ENCODE measurements at regions of chr9 and their contacts with region 1.

Region 1: GRCh38 chr9:124415102-124415851 is at the start of gene PSMB7:
- DNase-seq: peak; percentile 99
- H3K4me3 Mint-ChIP-seq: peak within 1 kb of the TSS; percentile 96
- H3K27ac Mint-ChIP-seq: peak within 1 kb of the TSS; percentile 95
- H3K4me1 Mint-ChIP-seq: peaks cover 26% of the 10 kb centered on the region
- H3K27me3 Mint-ChIP-seq: no peaks in the 10 kb centered on the region
- total RNA-seq, gene PSMB7: 223 and 225 TPM in 2 replicates

Region 2: GRCh38 chr9:122767817-122768216 is 1647.5 kb before region 1 on chr9:
- intact Hi-C with region 1: no loop called
- DNase-seq: no peak
- H3K4me3 Mint-ChIP-seq: no peak overlapping the region
- H3K27ac Mint-ChIP-seq: no peak overlapping the region
- H3K4me1 Mint-ChIP-seq: no peaks in the 10 kb centered on the region
- H3K27me3 Mint-ChIP-seq: no peaks in the 10 kb centered on the region

Region 3: GRCh38 chr9:123278361-123278760 is 1136.9 kb before region 1 on chr9:
- intact Hi-C with region 1: loop called (anchors 10 kb)
- DNase-seq: no peak
- H3K4me3 Mint-ChIP-seq: no peak overlapping the region
- H3K27ac Mint-ChIP-seq: no peak overlapping the region
- H3K4me1 Mint-ChIP-seq: peaks cover 2% of the 10 kb centered on the region
- H3K27me3 Mint-ChIP-seq: peaks cover 12% of the 10 kb centered on the region

Region 4: DNA sequence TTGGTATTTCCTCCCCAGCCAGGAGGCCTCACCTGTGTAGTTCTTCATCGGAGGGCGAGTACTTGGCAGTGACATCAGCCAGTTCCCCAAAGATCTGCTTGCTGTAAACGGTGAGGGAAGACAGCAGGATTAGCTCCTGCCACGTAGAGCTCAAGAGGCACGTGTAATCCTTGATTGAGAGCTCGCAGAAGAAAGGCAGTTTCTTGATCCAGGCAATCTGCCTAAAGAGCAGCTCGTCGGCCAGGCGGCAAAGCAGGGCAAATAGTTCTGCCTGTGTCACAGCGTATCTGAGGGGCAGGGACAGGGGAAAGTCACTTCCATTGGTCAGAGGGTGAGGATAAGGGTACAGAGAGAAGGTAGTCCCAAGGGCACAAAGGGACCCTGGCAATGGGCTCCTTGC is 120.6 kb after region 1 on chr9:
- intact Hi-C with region 1: loop called (anchors 1 kb)
- DNase-seq: no peak
- H3K4me3 Mint-ChIP-seq: no peak overlapping the region
- H3K27ac Mint-ChIP-seq: no peak overlapping the region
- H3K4me1 Mint-ChIP-seq: no peaks in the 10 kb centered on the region
- H3K27me3 Mint-ChIP-seq: peaks cover 6% of the 10 kb centered on the region

Region 5: DNA sequence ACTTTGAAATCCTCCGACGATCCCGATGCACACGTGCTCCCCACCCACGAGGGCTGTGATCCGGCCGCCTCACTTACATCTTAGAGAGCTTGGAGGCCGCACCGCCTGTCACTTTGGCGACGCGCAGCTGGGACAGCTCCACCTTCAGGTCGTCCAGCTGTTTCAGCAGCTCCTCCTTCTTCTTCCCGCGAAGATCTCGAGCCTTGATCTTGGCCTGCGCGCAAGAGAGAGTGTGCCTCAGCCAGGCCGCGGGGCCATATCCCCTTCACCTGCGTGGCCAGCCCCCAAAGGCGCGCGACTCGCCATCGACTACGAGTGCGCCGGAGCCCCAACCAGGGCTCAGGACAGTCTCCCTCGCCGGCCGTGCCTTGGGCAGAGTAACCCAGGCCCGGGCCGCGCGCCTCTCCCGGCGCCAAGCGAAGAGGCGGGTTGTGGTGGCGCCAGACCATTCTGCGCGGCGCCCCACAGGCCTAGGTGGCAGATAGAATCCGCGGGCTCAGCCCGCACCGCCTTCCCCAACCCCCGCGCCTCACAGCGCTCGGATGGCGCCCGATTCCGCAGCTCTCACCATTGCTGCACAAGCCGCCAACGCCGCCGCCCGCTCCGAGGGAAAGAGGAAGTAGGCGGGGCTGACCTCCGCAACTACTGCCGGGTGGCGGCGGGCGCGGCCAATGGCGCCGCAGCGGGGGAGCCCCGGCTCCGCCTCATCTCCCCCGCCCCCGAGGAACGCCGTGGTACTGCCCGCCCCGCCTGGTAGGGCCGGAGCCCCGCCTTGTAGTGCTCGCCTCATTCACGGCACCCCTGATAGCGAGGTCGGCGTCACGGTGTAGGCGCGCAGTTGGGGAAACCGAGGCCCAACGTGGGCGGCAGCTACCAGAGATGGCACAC is 446.3 kb after region 1 on chr9 and contains the starts of genes ARPC5L and RPL35:
- intact Hi-C with region 1: loop called (anchors 10 kb)
- DNase-seq: peak; percentile 99
- H3K4me3 Mint-ChIP-seq: peak within 1 kb of the TSS; percentile 98
- H3K27ac Mint-ChIP-seq: peak within 1 kb of the TSS; percentile 98
- H3K4me1 Mint-ChIP-seq: peaks cover 21% of the 10 kb centered on the region
- H3K27me3 Mint-ChIP-seq: no peaks in the 10 kb centered on the region
- total RNA-seq, gene ARPC5L: 99.8 and 103 TPM in 2 replicates
- total RNA-seq, gene RPL35: 1,878 and 1,905 TPM in 2 replicates

Measured in activated CD4-positive, alpha-beta T cell treated with anti-CD3 and anti-CD28 coated beads, Interleukin-2, amount 10 ng/mL, durations not matched to agents 24 days and 14 days (primary cell).